Esophagus muscularis mucosa (tissue), 4 donors: ENCODE measurements at regions of chr9 and their contacts with region 1.

Region 1: GRCh38 chr9:132800038-132800648 is 77.9 kb downstream of the AK8 start:
- DNase-seq: no peak
- H3K4me3 ChIP-seq: no peak overlapping the region
- H3K27ac ChIP-seq: no peak overlapping the region
- H3K4me1 ChIP-seq: peaks cover 7 to 13% (median 10%) of the 10 kb centered on the region in 4 donors
- H3K27me3 ChIP-seq: peaks cover 0 to 32% (median 0%) of the 10 kb centered on the region in 4 donors
- CTCF ChIP-seq: peak; percentile 91 to 96 (median 92)
- EP300 ChIP-seq: no peak
- POLR2A ChIP-seq: no peak

Region 2: GRCh38 chr9:132411091-132411508 is 389.0 kb before region 1 on chr9:
- intact Hi-C with region 1: loop called (anchors 10 kb)
- DNase-seq: no peak
- H3K4me3 ChIP-seq: peak overlapping the region in 3 of 4 donors; percentile 53 to 66 (median 55)
- H3K27ac ChIP-seq: no peak overlapping the region
- H3K4me1 ChIP-seq: peaks cover 27 to 32% (median 29%) of the 10 kb centered on the region in 4 donors
- H3K27me3 ChIP-seq: peaks cover 0 to 69% (median 37%) of the 10 kb centered on the region in 4 donors
- CTCF ChIP-seq: peak; percentile 25 to 51 (median 28)
- EP300 ChIP-seq: no peak
- POLR2A ChIP-seq: no peak

Region 3: DNA sequence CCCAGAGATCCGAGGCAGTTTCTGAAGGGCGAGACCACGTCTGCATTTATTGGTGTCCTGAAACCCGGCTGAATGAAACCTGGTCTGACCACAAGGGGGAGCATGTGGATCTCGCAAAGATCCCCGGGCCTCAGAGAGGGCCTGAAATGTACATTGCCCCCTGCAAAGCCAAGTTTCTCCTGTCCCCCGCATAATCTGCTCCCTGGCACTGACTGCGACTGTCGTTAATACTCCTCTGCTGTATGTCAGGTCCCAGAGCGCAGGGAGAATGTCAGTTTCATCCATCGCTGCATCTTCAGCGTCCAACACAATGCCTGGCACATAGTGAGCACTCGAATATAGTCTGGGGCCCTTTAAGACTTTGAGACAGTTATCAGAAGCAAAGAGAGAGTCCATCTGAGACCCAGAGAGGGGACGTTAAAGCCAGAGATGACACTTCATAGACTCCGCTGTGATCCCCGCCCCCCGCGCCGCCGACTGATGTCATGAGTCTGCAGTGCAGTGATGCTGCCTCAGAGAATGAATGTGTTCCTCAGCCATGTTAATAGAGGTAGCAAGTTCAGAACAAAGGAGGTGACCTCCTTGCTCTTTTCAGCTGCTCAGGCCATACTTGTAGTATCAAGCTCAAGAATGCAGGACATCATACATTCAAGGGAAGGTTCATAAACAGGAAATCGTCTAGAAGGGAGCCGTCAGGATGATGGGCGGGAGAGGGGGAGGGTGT is 292.2 kb before region 1 on chr9:
- intact Hi-C with region 1: loop called (anchors 1 kb)
- DNase-seq: no peak
- H3K4me3 ChIP-seq: no peak overlapping the region
- H3K27ac ChIP-seq: no peak overlapping the region
- H3K4me1 ChIP-seq: peaks cover 0 to 6% (median 0%) of the 10 kb centered on the region in 4 donors
- H3K27me3 ChIP-seq: peaks cover 0 to 96% (median 0%) of the 10 kb centered on the region in 4 donors
- CTCF ChIP-seq: peak; percentile 66 to 80 (median 77)
- EP300 ChIP-seq: no peak
- POLR2A ChIP-seq: no peak

Region 4: DNA sequence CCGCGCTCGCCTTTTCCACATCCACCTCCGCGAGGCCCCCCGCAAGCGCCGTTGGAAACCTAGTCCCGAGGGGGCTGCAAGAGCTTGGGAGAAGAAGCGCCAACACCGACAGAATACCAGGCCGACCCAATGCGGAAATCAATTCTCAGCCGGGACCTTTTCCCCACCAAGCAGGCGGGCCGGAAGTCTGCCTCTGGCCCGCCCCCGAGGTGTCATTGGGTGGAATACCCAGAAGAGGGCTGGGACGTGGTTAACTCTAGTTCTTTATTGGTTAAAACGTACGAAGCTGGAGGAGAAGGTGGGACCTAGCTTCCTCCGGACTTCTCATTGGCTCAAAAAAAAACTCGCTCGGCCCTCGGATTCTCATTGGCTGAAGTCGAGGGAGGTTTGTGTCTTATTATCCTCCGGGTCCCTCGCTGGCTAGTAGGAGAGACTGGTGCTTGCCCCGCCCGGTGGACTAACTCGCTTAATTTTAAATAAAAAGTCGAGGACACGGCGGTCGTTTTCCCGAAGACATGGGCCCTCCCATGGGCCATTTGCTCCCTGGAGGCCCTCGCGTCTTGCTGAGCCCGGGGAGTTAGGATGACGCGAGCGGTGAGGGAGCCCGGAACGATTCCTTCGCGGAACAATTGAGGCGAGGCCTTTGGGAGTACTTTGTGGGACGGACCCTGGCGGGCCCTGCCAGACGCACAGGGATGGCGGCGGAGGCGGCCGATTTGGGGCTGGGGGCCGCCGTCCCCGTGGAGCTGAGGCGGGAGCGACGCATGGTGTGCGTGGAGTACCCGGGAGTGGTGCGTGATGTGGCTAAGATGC is 230.4 kb after region 1 on chr9 and contains the start of gene GTF3C5:
- intact Hi-C with region 1: no loop called
- DNase-seq: peak; percentile 99
- H3K4me3 ChIP-seq: peak within 1 kb of the TSS; percentile 80 to 98 (median 86)
- H3K27ac ChIP-seq: peak within 1 kb of the TSS; percentile 86 to 93 (median 89)
- H3K4me1 ChIP-seq: peaks cover 30 to 57% (median 37%) of the 10 kb centered on the region in 4 donors
- H3K27me3 ChIP-seq: no peaks in the 10 kb centered on the region
- CTCF ChIP-seq: peak in 1 of 3 experiments; percentile 23
- EP300 ChIP-seq: no peak
- POLR2A ChIP-seq: peak; percentile 22
- total RNA-seq, gene GTF3C5: 38.9 to 58.1 (median 42.4) TPM